HepG2 (cell line): ENCODE measurements at regions of chr21 and their contacts with region 1.

Region 1: DNA sequence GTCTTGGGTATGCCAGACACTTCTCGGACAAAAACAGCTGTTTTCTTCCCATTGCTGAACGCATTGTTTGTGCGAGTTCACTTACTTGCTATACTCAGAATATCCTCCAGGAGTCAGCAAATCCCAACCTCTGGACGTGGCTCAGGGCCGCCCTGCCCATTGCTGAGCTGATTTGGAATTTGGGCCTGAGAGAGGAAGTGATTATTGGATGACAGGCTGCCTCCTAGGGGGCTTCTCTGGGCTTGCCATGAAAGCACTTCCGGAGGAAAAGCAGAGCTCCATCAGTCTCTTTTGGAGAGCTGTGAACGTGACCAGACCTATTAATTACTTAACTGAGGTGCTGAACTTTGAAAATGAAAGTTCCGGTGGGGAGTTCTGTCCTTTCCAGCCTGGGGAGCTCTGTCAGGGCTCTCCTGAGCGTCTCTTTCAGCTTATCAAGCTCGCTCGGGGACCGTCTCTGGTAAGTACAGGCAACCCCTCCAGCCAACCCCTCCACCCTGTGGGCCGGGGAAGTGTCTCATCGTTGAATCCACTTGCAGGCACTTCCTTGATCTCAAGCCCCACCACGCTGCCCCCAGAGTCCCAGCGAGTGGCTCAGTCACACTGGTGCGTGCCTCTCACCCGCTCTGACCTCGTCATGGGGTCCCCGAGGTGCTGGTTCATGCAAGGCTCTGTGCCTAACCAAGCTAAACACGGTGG is 76.9 kb downstream of the CLIC6 start:
- DNase-seq: peak; percentile 90
- ATAC-seq: peak; percentile 97
- H3K4me3 ChIP-seq: peak overlapping the region; percentile 49 to 72 (median 58)
- H3K27ac ChIP-seq: peak overlapping the region; percentile 43
- H3K4me1 ChIP-seq: peaks cover 44% of the 10 kb centered on the region
- H3K27me3 ChIP-seq: 0 out of 5 replicates have a peak, but pooled peaks cover 0 to 8% of the 10 kb centered on the region in 2 experiments
- CTCF ChIP-seq: peak; percentile 93
- EP300 ChIP-seq: no peak
- POLR2A ChIP-seq: no peak
- RAD21 ChIP-seq: peak; percentile 96

Region 2: DNA sequence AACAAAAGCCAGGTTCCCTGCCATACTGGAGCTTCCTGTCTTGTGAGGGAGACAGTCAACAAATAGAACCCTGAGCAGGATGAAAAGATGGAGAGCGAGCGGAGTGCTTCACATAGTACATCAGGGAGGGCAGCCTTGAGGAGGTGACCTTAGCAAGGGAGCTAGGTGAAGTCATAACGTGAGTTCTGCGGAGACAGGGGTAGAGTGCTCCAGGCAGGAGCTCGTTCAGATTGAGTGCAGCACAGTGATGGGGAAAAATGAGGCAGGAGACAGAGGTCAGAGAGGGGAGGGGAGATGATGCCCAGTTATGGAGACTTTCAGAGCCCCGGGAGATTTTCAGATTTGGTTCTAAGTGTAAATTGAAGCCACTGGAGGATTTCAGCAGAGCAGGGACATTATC is 92.2 kb before region 1 on chr21:
- CTCF ChIA-PET with region 1: no interaction called
- POLR2A ChIA-PET with region 1: no interaction called
- in situ Hi-C with region 1: no loop called
- intact Hi-C with region 1: no loop called
- DNase-seq: no peak
- ATAC-seq: no peak
- H3K4me3 ChIP-seq: no peak overlapping the region
- H3K27ac ChIP-seq: no peak overlapping the region
- H3K4me1 ChIP-seq: no peaks in the 10 kb centered on the region
- H3K27me3 ChIP-seq: peaks cover 2 to 4% of the 10 kb centered on the region in 2 experiments; a peak in 2 of 5 replicates
- CTCF ChIP-seq: no peak
- EP300 ChIP-seq: no peak
- POLR2A ChIP-seq: no peak
- RAD21 ChIP-seq: no peak

Region 3: GRCh38 chr21:34795175-34795547 is 49.5 kb after region 1 on chr21:
- CTCF ChIA-PET with region 1: interaction called, 4 read pairs
- POLR2A ChIA-PET with region 1: interaction called, 29 read pairs
- in situ Hi-C with region 1: no loop called
- intact Hi-C with region 1: loop called (anchors 5 kb)
- DNase-seq: no peak
- ATAC-seq: no peak; the same call in 2 of the 3 replicates
- H3K4me3 ChIP-seq: peak overlapping the region in 1 of 3 experiments; percentile 4; a peak in 1 of 6 replicates
- H3K27ac ChIP-seq: peak overlapping the region; percentile 66
- H3K4me1 ChIP-seq: peaks cover 83% of the 10 kb centered on the region
- H3K27me3 ChIP-seq: no peaks in the 10 kb centered on the region
- CTCF ChIP-seq: 0 out of 2 replicates have a peak, but pooled peaks have one; percentile 11
- EP300 ChIP-seq: no peak
- POLR2A ChIP-seq: no peak
- RAD21 ChIP-seq: no peak

Region 4: GRCh38 chr21:34820051-34820450 is 74.3 kb after region 1 on chr21:
- CTCF ChIA-PET with region 1: no interaction called
- POLR2A ChIA-PET with region 1: interaction called, 29 read pairs
- in situ Hi-C with region 1: no loop called
- intact Hi-C with region 1: no loop called
- DNase-seq: no peak
- ATAC-seq: no peak
- H3K4me3 ChIP-seq: no peak overlapping the region
- H3K27ac ChIP-seq: peak overlapping the region; percentile 90
- H3K4me1 ChIP-seq: peaks cover 68% of the 10 kb centered on the region
- H3K27me3 ChIP-seq: no peaks in the 10 kb centered on the region
- CTCF ChIP-seq: no peak
- EP300 ChIP-seq: no peak
- POLR2A ChIP-seq: no peak
- RAD21 ChIP-seq: no peak

Region 5: GRCh38 chr21:35043549-35043948 is 297.8 kb after region 1 on chr21:
- CTCF ChIA-PET with region 1: no interaction called
- POLR2A ChIA-PET with region 1: interaction called, 3 read pairs
- in situ Hi-C with region 1: no loop called
- intact Hi-C with region 1: loop called (anchors 5 kb)
- DNase-seq: no peak
- ATAC-seq: no peak
- H3K4me3 ChIP-seq: no peak overlapping the region
- H3K27ac ChIP-seq: no peak overlapping the region
- H3K4me1 ChIP-seq: peaks cover 60% of the 10 kb centered on the region
- H3K27me3 ChIP-seq: no peaks in the 10 kb centered on the region
- CTCF ChIP-seq: no peak
- EP300 ChIP-seq: no peak
- POLR2A ChIP-seq: no peak
- RAD21 ChIP-seq: no peak

Region 6: GRCh38 chr21:35840197-35840799 is 1094.6 kb after region 1 on chr21:
- CTCF ChIA-PET with region 1: interaction called, 5 read pairs
- POLR2A ChIA-PET with region 1: no interaction called
- in situ Hi-C with region 1: no loop called
- intact Hi-C with region 1: loop called (anchors 2 kb)
- DNase-seq: peak; percentile 50
- ATAC-seq: peak; percentile 50; the same call in 1 of the 3 replicates
- H3K4me3 ChIP-seq: no peak overlapping the region
- H3K27ac ChIP-seq: no peak overlapping the region
- H3K4me1 ChIP-seq: no peaks in the 10 kb centered on the region
- H3K27me3 ChIP-seq: no peaks in the 10 kb centered on the region
- CTCF ChIP-seq: peak; percentile 69
- EP300 ChIP-seq: no peak
- POLR2A ChIP-seq: no peak
- RAD21 ChIP-seq: peak; percentile 47; the same call in 1 of the 2 replicates